Heart right ventricle (tissue), 16 donors: ENCODE measurements at regions of chr14 and their contacts with region 1.

Region 1: GRCh38 chr14:52068615-52069303 is at the start of gene NID2:
- DNase-seq: peak; percentile 90
- ATAC-seq: peak; percentile 93 to 96 (median 94)
- H3K4me3 ChIP-seq: peak within 1 kb of the TSS; percentile 51 to 96 (median 76)
- H3K27ac ChIP-seq: peak within 1 kb of the TSS; percentile 67 to 92 (median 90)
- H3K4me1 ChIP-seq: peaks cover 0 to 62% (median 50%) of the 10 kb centered on the region in 9 donors
- H3K27me3 ChIP-seq: peaks cover 0 to 54% (median 0%) of the 10 kb centered on the region in 7 donors
- CTCF ChIP-seq: peak in 2 of 9 donors; percentile 14 to 27
- total RNA-seq, gene NID2: 26.6 to 66.0 (median 39.2) TPM

Region 2: GRCh38 chr14:51386983-51387735 is 681.6 kb before region 1 on chr14:
- intact Hi-C with region 1: no loop called
- DNase-seq: no peak
- ATAC-seq: peak in 3 of 8 donors; percentile 29 to 37 (median 35)
- H3K4me3 ChIP-seq: no peak overlapping the region
- H3K27ac ChIP-seq: peak overlapping the region in 1 of 10 donors; percentile 20
- H3K4me1 ChIP-seq: peaks cover 0 to 10% (median 0%) of the 10 kb centered on the region in 9 donors
- H3K27me3 ChIP-seq: no peaks in the 10 kb centered on the region
- CTCF ChIP-seq: no peak

Region 3: GRCh38 chr14:51922624-51923023 is 146.1 kb before region 1 on chr14:
- intact Hi-C with region 1: no loop called
- DNase-seq: peak in 1 of 2 donors; percentile 34
- ATAC-seq: peak; percentile 64 to 87 (median 82)
- H3K4me3 ChIP-seq: peak overlapping the region in 2 of 10 donors; percentile 2 to 9
- H3K27ac ChIP-seq: peak overlapping the region in 8 of 10 donors; percentile 3 to 74 (median 64)
- H3K4me1 ChIP-seq: peaks cover 0 to 19% (median 0%) of the 10 kb centered on the region in 9 donors
- H3K27me3 ChIP-seq: no peaks in the 10 kb centered on the region
- CTCF ChIP-seq: no peak

Region 4: GRCh38 chr14:51963286-51963685 is 105.5 kb before region 1 on chr14:
- intact Hi-C with region 1: no loop called
- DNase-seq: no peak
- ATAC-seq: no peak
- H3K4me3 ChIP-seq: peak overlapping the region in 5 of 10 donors; percentile 5 to 26 (median 18)
- H3K27ac ChIP-seq: peak overlapping the region in 1 of 10 donors; percentile 5
- H3K4me1 ChIP-seq: peaks cover 0 to 26% (median 4%) of the 10 kb centered on the region in 9 donors
- H3K27me3 ChIP-seq: peaks cover 0 to 4% (median 0%) of the 10 kb centered on the region in 7 donors
- CTCF ChIP-seq: no peak

Region 5: GRCh38 chr14:51989293-51990234 is 79.2 kb before region 1 on chr14 and contains the start of gene RTRAF:
- intact Hi-C with region 1: loop called in 1 of 10 experiments (anchors 10 kb)
- DNase-seq: peak; percentile 95
- ATAC-seq: peak; percentile 98 to 100 (median 99)
- H3K4me3 ChIP-seq: peak within 1 kb of the TSS; percentile 80 to 96 (median 93)
- H3K27ac ChIP-seq: peak within 1 kb of the TSS; percentile 82 to 96 (median 91)
- H3K4me1 ChIP-seq: peaks cover 0 to 53% (median 46%) of the 10 kb centered on the region in 9 donors
- H3K27me3 ChIP-seq: no peaks in the 10 kb centered on the region
- CTCF ChIP-seq: no peak
- total RNA-seq, gene RTRAF: 181 to 258 (median 214) TPM

Region 6: DNA sequence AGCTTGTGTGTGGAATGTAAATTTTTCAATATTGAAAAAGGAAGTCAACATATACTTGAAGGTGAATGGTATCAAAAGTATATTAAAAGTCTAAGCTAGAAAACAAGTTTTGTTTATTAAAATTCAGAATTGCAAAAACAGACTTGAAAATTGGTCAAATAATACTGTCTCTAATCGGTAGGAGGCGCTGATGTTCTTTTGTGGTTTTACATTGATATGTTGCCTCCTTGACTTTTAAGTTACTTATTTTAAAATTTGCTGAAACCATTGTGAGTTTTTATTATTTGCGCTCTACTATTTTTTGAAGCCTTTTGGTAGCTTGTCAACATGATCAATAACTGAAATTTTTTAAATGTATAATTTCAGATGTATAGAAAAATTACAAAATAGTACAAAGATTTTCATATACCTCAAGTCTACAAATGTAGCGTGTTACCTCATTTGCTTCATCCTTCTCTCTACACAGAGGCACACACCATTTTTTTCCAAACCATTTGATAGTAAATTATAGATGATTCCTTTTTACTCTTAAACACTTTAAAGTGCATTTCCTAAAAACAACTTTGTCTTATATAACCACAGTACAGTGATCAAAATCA is 72.5 kb before region 1 on chr14:
- intact Hi-C with region 1: loop called in 7 of 10 experiments (anchors 2 to 10 kb)
- DNase-seq: peak in 1 of 2 donors; percentile 39
- ATAC-seq: no peak
- H3K4me3 ChIP-seq: no peak overlapping the region
- H3K27ac ChIP-seq: peak overlapping the region in 2 of 10 donors; percentile 5 to 15
- H3K4me1 ChIP-seq: peaks cover 0 to 72% (median 56%) of the 10 kb centered on the region in 9 donors
- H3K27me3 ChIP-seq: no peaks in the 10 kb centered on the region
- CTCF ChIP-seq: peak; percentile 63 to 94 (median 84)

Region 7: GRCh38 chr14:52015411-52016030 is 53.2 kb before region 1 on chr14:
- intact Hi-C with region 1: loop called in 9 of 10 experiments (anchors 2 to 10 kb)
- DNase-seq: peak in 1 of 2 donors; percentile 46
- ATAC-seq: peak in 7 of 8 donors; percentile 18 to 63 (median 51)
- H3K4me3 ChIP-seq: peak overlapping the region in 1 of 10 donors; percentile 12
- H3K27ac ChIP-seq: peak overlapping the region; percentile 65 to 85 (median 74)
- H3K4me1 ChIP-seq: peaks cover 13 to 100% (median 90%) of the 10 kb centered on the region in 9 donors
- H3K27me3 ChIP-seq: no peaks in the 10 kb centered on the region
- CTCF ChIP-seq: peak; percentile 17 to 70 (median 45)

Region 8: DNA sequence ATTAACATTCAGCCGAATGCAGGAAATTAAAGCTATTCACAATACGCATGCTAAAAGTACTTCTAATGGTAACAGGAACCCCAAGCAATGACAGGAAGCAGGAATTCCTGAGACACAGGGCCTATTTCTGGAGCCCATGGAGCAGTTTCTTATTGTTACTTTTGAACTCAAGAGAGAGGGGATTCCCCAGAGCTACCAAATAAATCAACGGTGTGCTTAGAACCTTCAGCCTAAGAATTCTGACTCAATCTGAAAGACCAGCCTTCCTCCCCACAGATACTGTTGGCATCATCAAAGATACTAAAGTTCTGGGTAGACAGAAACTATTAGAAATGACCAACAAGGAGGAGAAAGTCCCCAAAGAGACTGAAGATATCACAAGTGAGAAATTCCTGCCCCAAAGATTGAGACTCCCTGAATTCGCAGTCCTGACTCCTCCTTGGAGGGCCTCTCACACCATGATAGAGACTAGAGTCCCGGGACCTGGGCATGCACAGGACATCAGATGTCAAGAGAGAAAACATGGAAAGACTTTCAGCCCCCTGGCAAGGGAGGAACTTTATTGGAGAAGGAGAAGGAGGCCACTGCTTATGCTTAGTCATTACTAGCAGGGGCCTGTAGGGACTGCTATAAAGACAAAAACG is 46.7 kb before region 1 on chr14:
- intact Hi-C with region 1: loop called in 3 of 10 experiments (anchors 5 to 10 kb)
- DNase-seq: peak in 1 of 2 donors; percentile 40
- ATAC-seq: peak in 5 of 8 donors; percentile 35 to 79 (median 54)
- H3K4me3 ChIP-seq: peak overlapping the region in 1 of 10 donors; percentile 5
- H3K27ac ChIP-seq: peak overlapping the region in 9 of 10 donors; percentile 33 to 75 (median 71)
- H3K4me1 ChIP-seq: peaks cover 16 to 100% (median 90%) of the 10 kb centered on the region in 9 donors
- H3K27me3 ChIP-seq: no peaks in the 10 kb centered on the region
- CTCF ChIP-seq: no peak

Region 9: GRCh38 chr14:52124791-52125661 is 56.3 kb after region 1 on chr14:
- intact Hi-C with region 1: loop called in 3 of 10 experiments (anchors 2 to 5 kb)
- DNase-seq: peak in 1 of 2 donors; percentile 40
- ATAC-seq: peak; percentile 71 to 89 (median 82)
- H3K4me3 ChIP-seq: no peak overlapping the region
- H3K27ac ChIP-seq: peak overlapping the region in 8 of 10 donors; percentile 4 to 82 (median 54)
- H3K4me1 ChIP-seq: peaks cover 0 to 32% (median 19%) of the 10 kb centered on the region in 9 donors
- H3K27me3 ChIP-seq: no peaks in the 10 kb centered on the region
- CTCF ChIP-seq: no peak

Region 10: GRCh38 chr14:52327374-52328226 is 258.8 kb after region 1 on chr14:
- intact Hi-C with region 1: no loop called
- DNase-seq: no peak
- ATAC-seq: peak in 1 of 8 donors; percentile 73
- H3K4me3 ChIP-seq: no peak overlapping the region
- H3K27ac ChIP-seq: peak overlapping the region in 1 of 10 donors; percentile 67
- H3K4me1 ChIP-seq: peaks cover 0 to 48% (median 0%) of the 10 kb centered on the region in 9 donors
- H3K27me3 ChIP-seq: no peaks in the 10 kb centered on the region
- CTCF ChIP-seq: no peak